K562 (cell line): ENCODE measurements at regions of chr5 and their contacts with region 1.

Region 1: DNA sequence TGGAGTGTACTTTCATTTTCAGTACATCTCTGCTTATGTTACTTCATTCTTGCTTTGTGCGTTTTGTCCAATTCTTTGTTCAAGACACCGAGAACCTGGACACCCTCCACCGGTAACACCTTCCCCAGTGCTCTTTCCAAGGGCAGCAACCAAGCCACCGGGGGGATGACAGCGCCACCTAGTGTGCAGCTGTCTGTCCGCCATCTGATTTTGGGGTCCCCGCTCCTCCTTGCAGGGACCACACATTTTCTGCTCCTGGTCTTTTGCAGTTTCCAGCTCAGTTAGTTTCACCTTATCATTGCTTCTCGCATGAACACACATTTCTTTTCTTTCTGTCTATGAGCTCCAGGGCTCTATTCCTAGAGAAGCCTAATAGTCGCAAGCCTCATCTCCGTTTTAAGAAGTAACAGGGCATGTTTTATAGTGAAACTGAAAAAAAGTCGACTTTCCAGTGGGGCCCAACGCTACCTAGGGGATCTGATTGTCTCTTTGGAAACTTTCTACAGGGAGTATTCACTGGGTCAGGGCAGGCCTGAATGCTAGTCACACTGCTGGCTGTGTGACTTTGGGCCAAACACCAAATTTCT is 152.1 kb downstream of the FSTL4 start:
- DNase-seq: peak; percentile 69 to 82 (median 79)
- ATAC-seq: peak; percentile 94
- H3K4me3 ChIP-seq: no peak overlapping the region
- H3K27ac ChIP-seq: no peak overlapping the region
- H3K4me1 ChIP-seq: no peaks in the 10 kb centered on the region
- H3K27me3 ChIP-seq: peaks cover 0 to 44% of the 10 kb centered on the region in 2 experiments; a peak in 3 of 5 replicates
- CTCF ChIP-seq: peak; percentile 81 to 91 (median 84)
- EP300 ChIP-seq: no peak
- POLR2A ChIP-seq: no peak
- RAD21 ChIP-seq: peak; percentile 46 to 79

Region 2: GRCh38 chr5:133364936-133365707 is 95.1 kb before region 1 on chr5:
- CTCF ChIA-PET with region 1: no interaction called
- POLR2A ChIA-PET with region 1: no interaction called
- in situ Hi-C with region 1: no loop called
- intact Hi-C with region 1: loop called (anchors 10 kb)
- DNase-seq: peak; percentile 5 to 52 (median 34)
- ATAC-seq: no peak
- H3K4me3 ChIP-seq: no peak overlapping the region
- H3K27ac ChIP-seq: no peak overlapping the region
- H3K4me1 ChIP-seq: no peaks in the 10 kb centered on the region
- H3K27me3 ChIP-seq: peaks cover 27 to 43% of the 10 kb centered on the region in 2 experiments
- CTCF ChIP-seq: peak; percentile 41 to 54 (median 42); a peak in 5 of 6 replicates
- EP300 ChIP-seq: no peak
- POLR2A ChIP-seq: no peak
- RAD21 ChIP-seq: peak in 1 of 2 experiments; percentile 30; a peak in 1 of 4 replicates

Region 3: GRCh38 chr5:133423618-133424282 is 36.5 kb before region 1 on chr5:
- CTCF ChIA-PET with region 1: interaction called, 11 read pairs
- POLR2A ChIA-PET with region 1: no interaction called
- in situ Hi-C with region 1: no loop called
- intact Hi-C with region 1: loop called (anchors 1 kb)
- DNase-seq: peak; percentile 68 to 89 (median 84)
- ATAC-seq: peak; percentile 98
- H3K4me3 ChIP-seq: no peak overlapping the region
- H3K27ac ChIP-seq: no peak overlapping the region
- H3K4me1 ChIP-seq: peaks cover 0 to 6% of the 10 kb centered on the region in 2 experiments; a peak in 2 of 5 replicates
- H3K27me3 ChIP-seq: peaks cover 9 to 56% of the 10 kb centered on the region in 2 experiments; a peak in 4 of 5 replicates
- CTCF ChIP-seq: peak; percentile 85 to 95 (median 88)
- EP300 ChIP-seq: no peak
- POLR2A ChIP-seq: no peak
- RAD21 ChIP-seq: peak; percentile 72 to 80

Region 4: DNA sequence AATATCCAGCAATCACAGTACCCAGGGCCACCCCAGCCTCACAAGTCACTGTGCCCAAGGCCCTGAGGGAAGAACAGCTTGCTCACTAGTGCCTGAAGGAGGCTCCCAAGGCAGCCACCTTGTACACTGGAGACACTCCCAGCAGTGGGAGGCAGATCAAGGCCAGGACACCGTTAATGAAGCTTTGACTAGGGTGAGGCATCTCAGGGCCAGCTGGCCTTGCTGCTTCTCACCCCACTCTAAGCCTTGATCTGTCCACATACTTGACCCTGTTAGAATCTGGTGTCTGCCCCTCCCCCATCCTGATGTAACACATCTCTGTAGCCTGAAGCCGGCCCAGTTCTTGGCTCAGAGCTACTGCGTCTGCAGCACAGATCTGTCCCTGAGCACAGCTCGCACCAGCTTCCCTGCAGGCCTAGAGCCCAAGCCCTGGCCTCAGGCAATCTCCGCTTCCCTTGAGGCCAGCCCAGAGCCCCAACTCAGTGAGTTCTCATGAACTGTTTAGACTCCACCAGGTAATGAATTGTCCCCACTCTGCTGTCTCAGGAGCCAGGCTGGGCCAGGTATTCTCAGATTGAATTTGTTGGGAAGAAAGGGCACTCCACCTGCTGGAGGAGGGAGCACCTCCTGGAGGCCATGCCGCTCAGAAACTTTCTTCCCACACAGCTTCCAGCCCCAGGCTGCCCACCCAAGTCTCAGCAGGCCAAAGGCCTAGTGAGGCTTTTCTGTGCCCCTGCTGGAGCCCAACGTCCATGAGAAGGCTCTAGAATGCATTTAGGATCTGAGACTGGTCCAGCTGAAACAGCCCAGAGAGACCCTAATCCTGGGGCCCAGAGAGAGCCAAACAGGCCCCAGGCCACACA is 1051.8 kb after region 1 on chr5:
- CTCF ChIA-PET with region 1: no interaction called
- POLR2A ChIA-PET with region 1: no interaction called
- in situ Hi-C with region 1: no loop called
- intact Hi-C with region 1: no loop called
- DNase-seq: peak; percentile 37 to 72 (median 50)
- ATAC-seq: peak; percentile 91
- H3K4me3 ChIP-seq: no peak overlapping the region
- H3K27ac ChIP-seq: peak overlapping the region; percentile 57; the same call in 2 of the 3 replicates
- H3K4me1 ChIP-seq: peaks cover 28 to 35% of the 10 kb centered on the region in 2 experiments
- H3K27me3 ChIP-seq: no peaks in the 10 kb centered on the region
- CTCF ChIP-seq: peak; percentile 45 to 55 (median 45); a peak in 4 of 6 replicates
- EP300 ChIP-seq: no peak
- POLR2A ChIP-seq: no peak
- RAD21 ChIP-seq: peak; percentile 51 to 70